Right ventricle myocardium inferior (tissue), 1 donor: ENCODE measurements at regions of chr2 and their contacts with region 1.

Region 1: DNA sequence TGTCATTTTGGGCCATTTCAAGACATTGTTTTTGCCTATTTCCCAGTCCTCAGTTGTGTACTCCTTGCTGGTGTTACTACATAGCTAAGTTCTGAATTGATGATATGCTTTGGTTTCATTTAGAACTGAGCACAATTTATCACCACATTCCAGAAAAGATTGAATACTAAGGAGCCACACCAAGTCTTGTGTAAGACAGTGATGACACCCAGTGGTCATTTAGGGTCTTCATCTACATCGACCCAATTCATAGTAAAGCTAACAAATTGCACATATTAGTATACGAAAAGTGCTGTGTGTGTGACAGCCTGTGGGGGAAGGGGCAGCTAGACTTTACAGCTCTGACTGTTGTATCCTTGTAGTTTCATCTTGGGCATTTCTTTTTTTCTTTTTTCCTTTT is 10.9 kb upstream of the DLX2 start:
- DNase-seq: no peak
- ATAC-seq: peak; percentile 50

Region 2: DNA sequence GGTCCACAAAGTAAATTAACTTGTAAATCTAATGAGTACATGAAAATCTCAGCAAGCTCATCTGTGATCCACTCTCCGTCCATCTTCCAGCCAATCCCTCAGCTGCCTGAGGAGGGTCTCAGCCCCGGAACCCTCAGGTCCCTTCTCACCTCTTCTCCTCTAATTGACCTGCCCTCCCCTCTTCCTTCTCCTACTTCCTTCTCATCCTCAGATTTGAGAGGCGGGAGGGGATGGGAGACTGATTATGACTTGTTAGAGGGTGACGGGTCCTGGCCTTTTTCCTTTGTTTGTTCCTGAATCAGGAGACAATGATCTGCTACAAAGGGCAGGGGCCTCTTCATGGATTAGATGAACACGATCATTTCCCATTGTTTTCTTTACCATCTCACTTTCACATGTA is 511.3 kb before region 1 on chr2:
- intact Hi-C with region 1: loop called (anchors 10 kb)
- DNase-seq: no peak
- ATAC-seq: no peak

Region 3: GRCh38 chr2:171787333-171788072 is 326.1 kb before region 1 on chr2:
- intact Hi-C with region 1: loop called (anchors 10 kb)
- DNase-seq: peak; percentile 67
- ATAC-seq: no peak

Region 4: GRCh38 chr2:172079838-172080640 is 33.6 kb before region 1 on chr2:
- intact Hi-C with region 1: no loop called
- DNase-seq: no peak
- ATAC-seq: no peak